ENCODE measurements at regions of chr1 and their contacts with region 1.

Region 1: GRCh38 chr1:202926720-202927491 is at the start of gene KLHL12:
- DNase-seq: peak; percentile 98
- H3K4me3 ChIP-seq: peak within 1 kb of the TSS; percentile 71
- H3K27ac ChIP-seq: peak within 1 kb of the TSS; percentile 63
- H3K4me1 ChIP-seq: peaks cover 5% of the 10 kb centered on the region
- H3K27me3 ChIP-seq: no peaks in the 10 kb centered on the region
- CTCF ChIP-seq: peak; percentile 60
- total RNA-seq, gene KLHL12: 17.8 and 22.9 TPM in 2 replicates

Region 2: DNA sequence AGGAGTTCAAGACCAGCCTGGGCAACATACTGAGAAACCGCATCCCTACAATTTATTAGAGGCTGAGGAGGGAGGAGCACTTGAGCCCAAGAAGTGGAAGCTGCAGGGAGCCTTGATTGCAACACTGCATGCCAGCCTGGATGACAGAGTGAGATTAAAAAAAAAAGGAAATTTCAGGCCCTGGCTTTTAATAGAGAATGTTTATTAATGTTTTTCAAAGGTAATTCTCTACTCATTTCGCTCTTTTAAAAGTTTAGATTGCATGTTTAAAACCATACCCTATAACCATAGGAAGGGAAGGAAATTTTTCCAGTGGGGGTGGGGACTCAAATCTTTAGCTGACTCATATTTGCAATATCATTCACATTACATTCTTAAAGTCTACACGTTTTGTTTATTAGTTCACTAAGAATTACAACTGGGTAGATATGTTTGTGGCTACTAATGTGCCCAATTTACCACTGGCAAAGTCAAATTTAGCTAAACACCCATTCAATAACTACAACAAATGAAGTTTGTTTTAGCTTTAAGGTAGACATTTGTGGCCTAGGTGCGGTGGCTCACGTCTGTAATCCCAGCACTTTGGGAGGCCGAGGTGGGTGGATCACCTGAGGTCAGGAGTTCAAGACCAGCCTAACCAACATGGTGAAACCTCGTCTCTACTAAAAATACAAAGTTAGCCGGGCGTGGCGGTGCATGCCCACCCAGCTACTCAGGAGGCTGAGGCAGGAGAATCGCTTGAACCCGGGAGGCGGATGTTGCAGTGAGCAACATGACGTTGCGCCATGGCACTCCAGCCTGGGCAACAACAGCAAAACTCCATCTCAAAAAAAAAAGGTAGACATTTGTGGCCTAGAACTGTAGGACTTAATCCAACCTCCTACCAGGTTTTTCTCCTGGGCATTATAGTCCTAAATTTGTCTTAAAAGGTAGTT is 123.6 kb before region 1 on chr1:
- CTCF ChIA-PET with region 1: interaction called, 13 read pairs
- POLR2A ChIA-PET with region 1: no interaction called
- intact Hi-C with region 1: no loop called
- DNase-seq: peak; percentile 81
- H3K4me3 ChIP-seq: no peak overlapping the region
- H3K27ac ChIP-seq: peak overlapping the region; percentile 18
- H3K4me1 ChIP-seq: peaks cover 31% of the 10 kb centered on the region
- H3K27me3 ChIP-seq: no peaks in the 10 kb centered on the region
- CTCF ChIP-seq: no peak

Region 3: GRCh38 chr1:202915146-202915545 is 11.8 kb before region 1 on chr1:
- CTCF ChIA-PET with region 1: no interaction called
- POLR2A ChIA-PET with region 1: no interaction called
- intact Hi-C with region 1: no loop called
- DNase-seq: peak; percentile 91
- H3K4me3 ChIP-seq: no peak overlapping the region
- H3K27ac ChIP-seq: peak overlapping the region; percentile 62
- H3K4me1 ChIP-seq: peaks cover 10% of the 10 kb centered on the region
- H3K27me3 ChIP-seq: no peaks in the 10 kb centered on the region
- CTCF ChIP-seq: no peak

Region 4: DNA sequence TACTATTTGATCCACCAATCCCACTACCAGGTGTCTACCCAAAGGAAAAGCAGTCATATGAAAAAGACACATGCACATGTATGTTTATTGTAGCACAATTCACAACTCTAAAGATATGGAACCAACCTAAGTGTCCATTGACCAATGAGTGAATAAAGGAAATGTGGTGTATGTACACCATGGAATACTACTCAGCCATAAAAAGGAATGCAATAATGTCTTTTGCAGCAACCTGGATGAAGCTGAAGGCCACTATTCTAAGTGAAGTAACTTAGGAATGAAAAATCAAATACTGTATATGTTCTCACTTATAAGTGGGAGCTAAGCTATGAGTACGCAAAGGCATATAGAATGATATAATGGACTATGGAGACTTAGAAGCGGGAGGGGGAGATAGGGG is 18.6 kb after region 1 on chr1:
- CTCF ChIA-PET with region 1: interaction called, 12 read pairs
- POLR2A ChIA-PET with region 1: no interaction called
- intact Hi-C with region 1: no loop called
- DNase-seq: no peak
- H3K4me3 ChIP-seq: no peak overlapping the region
- H3K27ac ChIP-seq: no peak overlapping the region
- H3K4me1 ChIP-seq: no peaks in the 10 kb centered on the region
- H3K27me3 ChIP-seq: no peaks in the 10 kb centered on the region
- CTCF ChIP-seq: no peak

Region 5: GRCh38 chr1:203006948-203007871 is 80.3 kb after region 1 on chr1 and contains the start of gene TMEM183A:
- CTCF ChIA-PET with region 1: no interaction called
- POLR2A ChIA-PET with region 1: interaction called, 6 read pairs
- intact Hi-C with region 1: loop called (anchors 5 kb)
- DNase-seq: peak; percentile 98
- H3K4me3 ChIP-seq: peak within 1 kb of the TSS; percentile 97
- H3K27ac ChIP-seq: peak within 1 kb of the TSS; percentile 90
- H3K4me1 ChIP-seq: peaks cover 13% of the 10 kb centered on the region
- H3K27me3 ChIP-seq: no peaks in the 10 kb centered on the region
- CTCF ChIP-seq: no peak
- total RNA-seq, gene TMEM183A: 65.1 and 68.4 TPM in 2 replicates

Measured in A673 (cell line).